Panc1 (cell line): ENCODE measurements at regions of chr19 and their contacts with region 1.

Region 1: DNA sequence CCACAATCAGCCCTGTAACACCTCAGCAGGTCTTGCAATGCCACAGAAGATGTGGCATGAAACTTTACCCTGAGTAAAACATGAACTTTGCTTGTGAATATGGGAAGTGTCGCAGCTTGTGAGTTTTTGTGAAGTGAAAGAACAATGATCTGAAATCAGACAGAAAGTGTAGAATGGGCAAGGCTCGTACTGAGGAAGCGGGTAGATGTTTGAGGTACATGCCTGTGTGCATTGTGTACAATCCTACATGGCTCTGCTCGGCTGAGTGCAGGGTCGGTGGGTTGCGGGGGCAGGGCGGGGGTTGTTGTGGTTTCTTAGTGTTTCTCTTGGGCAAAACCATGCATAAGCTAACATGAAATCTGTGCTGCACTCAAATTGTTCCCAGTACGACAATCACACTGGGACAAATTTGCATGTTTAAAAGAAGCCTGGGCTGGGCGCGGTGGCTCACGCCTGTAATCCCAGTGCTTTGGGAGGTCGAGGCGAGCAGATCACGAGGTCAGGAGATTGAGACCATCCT is 1.1 kb downstream of the NLRP13 start:
- DNase-seq: no peak
- ATAC-seq: no peak
- H3K4me3 ChIP-seq: no peak overlapping the region
- H3K27ac ChIP-seq: no peak overlapping the region
- H3K4me1 ChIP-seq: no peaks in the 10 kb centered on the region
- H3K27me3 ChIP-seq: peaks cover 12% of the 10 kb centered on the region
- CTCF ChIP-seq: no peak

Region 2: DNA sequence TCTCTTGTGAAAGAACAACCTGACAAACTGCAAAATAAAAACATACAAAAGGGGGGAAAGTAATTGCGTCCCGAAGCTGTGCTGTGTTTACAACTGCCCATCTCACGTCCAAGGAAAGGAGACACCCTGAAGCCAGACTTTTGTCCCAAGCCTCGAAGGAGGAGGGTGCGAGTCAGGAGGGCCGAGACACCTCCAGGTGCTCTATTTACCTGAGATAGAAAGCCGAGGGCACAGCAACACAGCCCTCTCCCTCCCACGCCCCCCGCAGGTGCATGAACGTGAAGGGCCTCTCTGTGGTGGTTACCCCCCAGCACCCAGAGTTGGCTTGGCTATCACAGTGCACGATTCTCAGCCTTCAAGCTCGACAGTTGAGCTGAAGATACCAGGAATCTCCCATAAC is 32.1 kb before region 1 on chr19:
- CTCF ChIA-PET with region 1: no interaction called
- POLR2A ChIA-PET with region 1: no interaction called
- in situ Hi-C with region 1: loop called (anchors 5 kb)
- intact Hi-C with region 1: no loop called
- DNase-seq: no peak
- ATAC-seq: no peak
- H3K4me3 ChIP-seq: no peak overlapping the region
- H3K27ac ChIP-seq: no peak overlapping the region
- H3K4me1 ChIP-seq: 0 out of 2 replicates have a peak, but pooled peaks cover 3% of the 10 kb centered on the region
- H3K27me3 ChIP-seq: no peaks in the 10 kb centered on the region; the same call in 1 of the 2 replicates
- CTCF ChIP-seq: no peak